Activated CD4-positive, alpha-beta memory T cell treated with anti-CD3 and anti-CD28 coated beads for 36 hours (primary cell): ENCODE measurements at regions of chr17 and their contacts with region 1.

Region 1: DNA sequence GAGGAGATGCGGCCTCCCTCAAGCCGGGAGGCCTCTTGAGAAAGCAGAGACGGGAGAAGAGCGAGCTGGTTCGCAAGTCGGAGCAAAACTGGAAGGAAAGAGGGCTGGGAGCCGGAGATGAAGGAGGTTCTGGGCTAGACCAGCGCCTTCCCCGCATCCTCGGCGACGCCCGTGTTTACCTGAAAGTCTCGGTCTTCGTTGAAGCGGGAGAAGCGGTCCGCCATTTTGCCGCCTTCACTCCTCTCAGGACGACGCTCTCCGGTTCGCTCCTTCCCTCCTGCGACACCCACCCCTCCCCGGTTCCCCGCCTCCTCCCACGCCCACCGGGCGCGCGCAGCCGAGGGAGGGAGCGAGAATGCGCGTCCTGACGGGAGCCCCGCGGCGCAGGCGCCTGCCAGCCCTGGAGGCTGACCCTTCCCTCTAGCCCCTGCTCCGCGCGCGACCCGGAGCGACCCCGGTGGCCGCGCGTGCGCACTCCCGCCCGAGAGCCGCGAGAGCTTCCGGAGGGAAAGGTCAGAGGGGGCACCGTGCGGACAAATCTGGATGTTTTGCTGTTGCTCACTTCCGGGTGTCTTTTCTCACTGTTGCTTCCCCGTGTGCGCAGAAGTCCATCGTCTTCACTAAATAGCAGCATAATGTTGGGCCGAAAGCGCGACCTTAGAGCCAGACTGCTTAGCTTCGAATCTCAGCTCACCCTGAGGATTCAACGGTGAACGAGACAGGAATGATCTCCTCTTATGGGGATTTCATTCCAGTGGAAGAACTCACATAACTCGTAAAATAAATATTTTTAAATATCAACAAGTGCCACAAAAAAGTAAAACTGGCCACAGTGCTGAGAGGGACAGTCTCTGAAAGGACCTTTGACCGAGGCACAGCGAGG is at the start of gene GPATCH8:
- DNase-seq: peak; percentile 97
- H3K4me3 Mint-ChIP-seq: peak within 1 kb of the TSS; percentile 97
- H3K27ac Mint-ChIP-seq: peak within 1 kb of the TSS; percentile 93
- H3K4me1 Mint-ChIP-seq: peaks cover 32% of the 10 kb centered on the region
- H3K27me3 Mint-ChIP-seq: no peaks in the 10 kb centered on the region
- total RNA-seq, gene GPATCH8: 38.5 to 40.8 TPM

Region 2: GRCh38 chr17:44385287-44386181 is 117.9 kb before region 1 on chr17:
- CTCF ChIA-PET with region 1: no interaction called
- POLR2A ChIA-PET with region 1: no interaction called
- intact Hi-C with region 1: loop called (anchors 5 kb)
- DNase-seq: peak; percentile 95
- H3K4me3 Mint-ChIP-seq: peak overlapping the region; percentile 58
- H3K27ac Mint-ChIP-seq: no peak overlapping the region
- H3K4me1 Mint-ChIP-seq: peaks cover 10% of the 10 kb centered on the region
- H3K27me3 Mint-ChIP-seq: peaks cover 18% of the 10 kb centered on the region

Region 3: GRCh38 chr17:44417553-44417952 is 85.8 kb before region 1 on chr17:
- CTCF ChIA-PET with region 1: no interaction called
- POLR2A ChIA-PET with region 1: no interaction called
- intact Hi-C with region 1: loop called (anchors 5 kb)
- DNase-seq: peak; percentile 52
- H3K4me3 Mint-ChIP-seq: no peak overlapping the region
- H3K27ac Mint-ChIP-seq: peak overlapping the region; percentile 54
- H3K4me1 Mint-ChIP-seq: peaks cover 16% of the 10 kb centered on the region
- H3K27me3 Mint-ChIP-seq: no peaks in the 10 kb centered on the region